Caco-2 (cell line): ENCODE measurements at regions of chr3 and their contacts with region 1.

Region 1: GRCh38 chr3:14203521-14204079 is 25.0 kb downstream of the LSM3 start:
- DNase-seq: peak; percentile 76 to 78
- H3K4me3 ChIP-seq: no peak overlapping the region
- H3K4me3 Mint-ChIP-seq: peak overlapping the region; percentile 44
- H3K27ac Mint-ChIP-seq: peak overlapping the region; percentile 89
- H3K4me1 ChIP-seq: peaks cover 77% of the 10 kb centered on the region
- H3K4me1 Mint-ChIP-seq: peaks cover 53% of the 10 kb centered on the region
- H3K27me3 ChIP-seq: no peaks in the 10 kb centered on the region
- H3K27me3 Mint-ChIP-seq: no peaks in the 10 kb centered on the region
- CTCF ChIP-seq: peak; percentile 78 to 83

Region 2: GRCh38 chr3:14178247-14179113 is 25.1 kb before region 1 on chr3 and contains the starts of genes LSM3 and XPC:
- CTCF ChIA-PET with region 1: interaction called, 10 read pairs
- POLR2A ChIA-PET with region 1: interaction called, 32 read pairs
- intact Hi-C with region 1: no loop called
- DNase-seq: peak; percentile 97 to 98
- H3K4me3 ChIP-seq: peak within 1 kb of the TSS; percentile 95
- H3K4me3 Mint-ChIP-seq: peak within 1 kb of the TSS; percentile 82
- H3K27ac Mint-ChIP-seq: peak within 1 kb of the TSS; percentile 94
- H3K4me1 ChIP-seq: peaks cover 16% of the 10 kb centered on the region
- H3K4me1 Mint-ChIP-seq: peaks cover 24% of the 10 kb centered on the region
- H3K27me3 ChIP-seq: no peaks in the 10 kb centered on the region
- H3K27me3 Mint-ChIP-seq: no peaks in the 10 kb centered on the region
- CTCF ChIP-seq: no peak
- total RNA-seq, gene LSM3: 19.1 and 20.5 TPM in 2 replicates
- total RNA-seq, gene XPC: 31.0 and 33.1 TPM in 2 replicates

Region 3: DNA sequence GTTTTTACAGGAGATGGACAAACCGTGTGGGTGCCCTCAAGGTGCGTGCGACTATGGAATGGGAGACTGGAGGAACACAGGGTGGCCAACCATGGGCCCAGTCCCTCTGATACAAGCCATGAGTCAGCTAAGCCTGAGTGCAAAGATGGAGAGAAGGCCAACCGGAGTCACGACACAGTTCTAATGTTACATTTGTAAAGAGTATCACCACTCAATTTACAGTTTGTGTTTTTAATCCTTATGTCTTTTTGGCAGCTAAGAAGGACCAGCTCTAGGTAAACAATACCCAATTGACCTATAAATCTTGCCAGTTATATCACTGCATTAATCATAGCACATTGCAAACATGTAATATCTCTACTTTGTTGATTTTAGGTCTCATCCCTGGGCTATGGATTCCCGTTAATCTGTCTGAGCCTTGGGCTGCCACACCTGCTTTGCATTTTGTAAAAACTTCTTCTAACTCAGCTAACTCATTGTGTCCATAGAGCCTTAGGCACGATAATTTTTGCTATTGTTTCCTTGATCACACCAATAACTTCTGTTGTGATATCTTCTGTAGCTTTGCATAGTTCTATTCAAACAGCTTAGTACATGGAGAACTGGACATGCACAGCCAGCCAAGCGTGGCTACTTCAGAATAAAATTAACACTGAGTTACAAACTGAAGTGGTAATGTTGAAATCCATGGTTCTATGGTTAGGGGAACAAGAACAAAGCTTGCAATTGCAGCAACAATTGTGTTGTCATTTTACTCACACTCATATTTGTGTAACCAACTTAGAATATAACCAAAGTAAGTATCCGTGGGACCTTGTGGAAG is 25.3 kb after region 1 on chr3:
- CTCF ChIA-PET with region 1: interaction called, 21 read pairs
- POLR2A ChIA-PET with region 1: interaction called, 10 read pairs
- intact Hi-C with region 1: loop called (anchors 1 kb)
- DNase-seq: no peak
- H3K4me3 ChIP-seq: no peak overlapping the region
- H3K4me3 Mint-ChIP-seq: peak overlapping the region; percentile 81
- H3K27ac Mint-ChIP-seq: peak overlapping the region; percentile 96
- H3K4me1 ChIP-seq: peaks cover 83% of the 10 kb centered on the region
- H3K4me1 Mint-ChIP-seq: peaks cover 80% of the 10 kb centered on the region
- H3K27me3 ChIP-seq: no peaks in the 10 kb centered on the region
- H3K27me3 Mint-ChIP-seq: no peaks in the 10 kb centered on the region
- CTCF ChIP-seq: no peak

Region 4: DNA sequence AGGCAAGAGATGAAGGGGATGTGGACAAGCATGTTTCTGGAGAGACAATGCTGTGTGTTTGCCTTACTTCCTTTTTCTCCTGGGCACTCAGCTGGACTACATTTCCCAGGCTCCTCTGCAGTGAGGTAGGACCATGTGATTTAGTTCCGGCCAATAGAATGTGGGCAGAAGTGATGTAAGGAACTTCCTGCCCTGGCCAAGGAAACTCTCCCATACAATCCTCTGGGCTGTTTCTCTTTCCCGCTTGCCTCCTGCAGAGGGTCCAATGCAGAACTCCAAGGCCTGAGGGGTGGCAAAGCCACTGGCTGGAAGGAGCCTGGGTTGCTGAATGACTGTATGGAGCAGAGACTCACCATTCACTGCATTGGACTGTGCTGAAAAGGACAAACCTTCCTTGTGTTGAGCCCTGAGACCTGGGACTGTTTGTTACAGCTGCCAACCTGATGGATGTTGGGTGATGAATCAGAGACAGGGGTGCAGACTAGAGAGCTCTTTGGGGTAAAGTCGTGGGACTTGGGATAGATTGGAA is 116.1 kb after region 1 on chr3:
- CTCF ChIA-PET with region 1: interaction called, 11 read pairs
- POLR2A ChIA-PET with region 1: no interaction called
- intact Hi-C with region 1: loop called (anchors 2 kb)
- DNase-seq: peak; percentile 77 to 85
- H3K4me3 ChIP-seq: no peak overlapping the region
- H3K4me3 Mint-ChIP-seq: peak overlapping the region; percentile 51
- H3K27ac Mint-ChIP-seq: peak overlapping the region; percentile 86
- H3K4me1 ChIP-seq: peaks cover 53% of the 10 kb centered on the region
- H3K4me1 Mint-ChIP-seq: peaks cover 37% of the 10 kb centered on the region
- H3K27me3 ChIP-seq: no peaks in the 10 kb centered on the region
- H3K27me3 Mint-ChIP-seq: no peaks in the 10 kb centered on the region
- CTCF ChIP-seq: no peak

Region 5: GRCh38 chr3:14418296-14419250 is 215.0 kb after region 1 on chr3:
- CTCF ChIA-PET with region 1: interaction called, 4 read pairs
- POLR2A ChIA-PET with region 1: no interaction called
- intact Hi-C with region 1: loop called (anchors 5 kb)
- DNase-seq: peak; percentile 89
- H3K4me3 ChIP-seq: no peak overlapping the region
- H3K4me3 Mint-ChIP-seq: peak overlapping the region; percentile 35
- H3K27ac Mint-ChIP-seq: peak overlapping the region; percentile 88
- H3K4me1 ChIP-seq: peaks cover 37% of the 10 kb centered on the region
- H3K4me1 Mint-ChIP-seq: peaks cover 19% of the 10 kb centered on the region
- H3K27me3 ChIP-seq: no peaks in the 10 kb centered on the region
- H3K27me3 Mint-ChIP-seq: no peaks in the 10 kb centered on the region
- CTCF ChIP-seq: no peak